Panc1 (cell line): ENCODE measurements at regions of chrX and their contacts with region 1.

Region 1: GRCh38 chrX:30153881-30154260 is 61.5 kb upstream of the MAGEB2 start:
- DNase-seq: no peak
- ATAC-seq: no peak
- H3K4me3 ChIP-seq: no peak overlapping the region
- H3K27ac ChIP-seq: no peak overlapping the region
- H3K4me1 ChIP-seq: no peaks in the 10 kb centered on the region
- H3K27me3 ChIP-seq: no peaks in the 10 kb centered on the region
- CTCF ChIP-seq: no peak

Region 2: GRCh38 chrX:29604381-29604780 is 549.5 kb before region 1 on chrX:
- CTCF ChIA-PET with region 1: no interaction called
- POLR2A ChIA-PET with region 1: interaction called, 10 read pairs
- in situ Hi-C with region 1: no loop called
- intact Hi-C with region 1: no loop called
- DNase-seq: no peak
- ATAC-seq: no peak
- H3K4me3 ChIP-seq: no peak overlapping the region
- H3K27ac ChIP-seq: no peak overlapping the region
- H3K4me1 ChIP-seq: no peaks in the 10 kb centered on the region
- H3K27me3 ChIP-seq: no peaks in the 10 kb centered on the region
- CTCF ChIP-seq: no peak

Region 3: DNA sequence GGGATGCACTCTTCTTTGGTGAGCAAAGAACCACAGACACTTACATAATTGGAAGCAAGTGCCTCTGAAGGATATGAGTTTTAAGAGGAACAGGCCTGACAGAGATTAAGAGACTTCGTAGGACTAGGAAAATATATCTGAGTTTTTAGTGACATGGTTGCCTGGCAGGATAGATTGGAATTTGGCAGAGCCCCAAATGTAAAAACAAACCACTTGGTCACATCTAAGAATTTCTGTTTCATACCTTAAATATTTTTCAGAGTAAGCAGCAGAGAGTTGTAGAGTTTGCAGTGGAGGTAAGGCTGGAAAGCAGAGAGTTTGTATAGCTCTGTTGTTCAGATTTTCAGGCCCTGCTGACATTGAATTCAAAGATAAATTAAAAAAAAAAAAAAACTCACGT is 88.6 kb before region 1 on chrX:
- CTCF ChIA-PET with region 1: no interaction called
- POLR2A ChIA-PET with region 1: no interaction called
- in situ Hi-C with region 1: no loop called
- intact Hi-C with region 1: no loop called
- DNase-seq: no peak
- ATAC-seq: no peak
- H3K4me3 ChIP-seq: no peak overlapping the region
- H3K27ac ChIP-seq: no peak overlapping the region
- H3K4me1 ChIP-seq: no peaks in the 10 kb centered on the region
- H3K27me3 ChIP-seq: no peaks in the 10 kb centered on the region
- CTCF ChIP-seq: no peak

Region 4: DNA sequence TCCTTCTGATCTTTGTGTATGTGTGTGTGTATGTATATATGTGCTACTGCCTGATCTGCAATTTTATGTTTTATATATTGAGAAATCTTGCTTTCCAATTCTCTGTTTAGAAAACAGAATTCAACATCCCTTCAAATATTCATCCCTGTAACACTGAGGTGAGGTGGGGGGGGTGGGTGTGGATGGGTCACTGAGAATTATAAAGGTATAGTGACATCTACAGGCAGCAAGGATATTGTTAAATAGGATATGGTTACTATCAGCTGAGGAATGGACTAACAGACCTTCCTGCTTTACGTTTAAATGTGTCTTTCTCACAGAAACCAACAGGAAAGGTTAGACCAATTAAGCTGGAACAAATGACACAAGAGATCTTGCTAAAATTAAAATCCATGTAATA is 42.5 kb after region 1 on chrX:
- CTCF ChIA-PET with region 1: no interaction called
- POLR2A ChIA-PET with region 1: no interaction called
- in situ Hi-C with region 1: no loop called
- intact Hi-C with region 1: no loop called
- DNase-seq: no peak
- ATAC-seq: peak; percentile 68; the same call in 1 of the 2 replicates
- H3K4me3 ChIP-seq: no peak overlapping the region
- H3K27ac ChIP-seq: no peak overlapping the region; the same call in 1 of the 2 replicates
- H3K4me1 ChIP-seq: no peaks in the 10 kb centered on the region
- H3K27me3 ChIP-seq: no peaks in the 10 kb centered on the region
- CTCF ChIP-seq: peak; percentile 35; the same call in 1 of the 2 replicates